GM10248 (cell line): ENCODE measurements at regions of chr6 and their contacts with region 1.

Region 1: DNA sequence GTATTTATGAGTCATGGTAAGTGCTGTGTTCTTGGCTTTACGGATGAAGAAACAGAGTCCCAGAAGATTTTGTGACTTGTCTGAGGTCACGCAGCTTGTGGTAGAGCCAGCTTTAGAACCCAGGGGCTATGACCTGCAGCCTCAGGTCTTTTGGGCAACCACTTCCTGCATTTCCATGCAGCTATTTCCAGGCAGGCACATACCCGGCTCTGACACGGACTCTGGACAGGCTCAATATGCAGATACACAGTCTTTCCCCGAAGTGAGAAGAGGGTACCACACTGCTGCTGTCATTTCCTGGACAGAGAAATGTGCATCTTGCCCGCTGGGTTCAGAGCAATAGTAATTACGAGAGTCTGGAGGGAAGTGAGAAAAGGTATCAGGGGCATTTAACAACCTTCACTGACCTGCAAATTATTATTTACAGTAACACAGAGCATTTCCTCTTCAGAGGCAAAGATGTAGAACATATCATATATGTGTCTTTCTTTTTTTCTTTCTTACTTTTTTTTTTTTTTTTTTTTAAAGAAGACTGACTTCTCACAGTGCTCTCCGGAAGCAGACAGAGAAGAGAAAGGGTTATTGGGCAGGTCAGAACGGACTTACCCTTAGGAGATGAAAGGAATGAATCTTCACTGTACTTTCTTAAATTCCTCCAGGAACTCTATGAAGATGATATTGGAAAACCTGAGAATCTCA is 185.1 kb downstream of the CLIC5 start:
- DNase-seq: peak; percentile 72
- CTCF ChIP-seq: no peak

Region 2: GRCh38 chr6:45398075-45398839 is 432.3 kb before region 1 on chr6:
- CTCF ChIA-PET with region 1: no interaction called
- POLR2A ChIA-PET with region 1: no interaction called
- DNase-seq: no peak
- CTCF ChIP-seq: no peak

Region 3: GRCh38 chr6:45806172-45806571 is 24.4 kb before region 1 on chr6:
- CTCF ChIA-PET with region 1: no interaction called
- POLR2A ChIA-PET with region 1: no interaction called
- DNase-seq: no peak
- CTCF ChIP-seq: no peak

Region 4: DNA sequence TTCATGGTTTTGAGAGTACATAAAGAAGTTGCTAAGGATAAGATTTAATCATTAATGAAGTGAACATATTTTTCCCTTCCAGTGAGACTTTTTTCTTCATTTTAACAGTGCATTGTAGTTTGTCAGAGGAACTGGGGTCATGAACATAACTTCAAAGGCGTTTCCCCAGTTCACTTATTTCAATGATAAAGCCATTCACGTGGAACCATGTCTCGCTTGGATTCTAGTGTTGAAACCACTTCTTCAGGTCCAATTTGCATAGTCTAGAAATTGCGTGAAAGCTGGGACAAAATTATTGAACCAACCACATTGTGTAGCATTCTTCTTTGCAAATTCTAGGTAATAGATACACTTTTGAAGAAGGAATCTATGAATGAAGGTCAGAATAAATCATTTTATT is 11.9 kb before region 1 on chr6:
- CTCF ChIA-PET with region 1: interaction called, 11 read pairs
- POLR2A ChIA-PET with region 1: no interaction called
- DNase-seq: no peak
- CTCF ChIP-seq: no peak

Region 5: DNA sequence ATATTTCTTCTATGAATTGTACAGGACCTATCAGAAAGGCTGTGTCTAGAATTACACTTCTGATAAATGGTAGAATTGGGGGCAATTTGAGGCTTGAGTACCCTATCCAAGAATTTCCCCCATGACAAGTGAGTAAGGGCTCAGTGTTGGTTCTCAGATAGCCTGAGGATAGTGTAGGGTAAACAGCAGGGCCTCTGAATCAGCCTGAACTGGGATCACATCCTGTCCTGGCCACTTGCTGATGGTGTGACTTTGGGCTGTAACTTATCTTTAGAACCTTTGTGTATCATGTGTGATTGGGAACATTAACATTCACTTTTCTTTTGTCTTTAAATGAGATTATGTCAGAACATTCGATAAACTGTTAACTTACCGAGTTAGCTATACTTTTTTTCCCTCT is 34.1 kb after region 1 on chr6:
- CTCF ChIA-PET with region 1: no interaction called
- POLR2A ChIA-PET with region 1: no interaction called
- DNase-seq: no peak
- CTCF ChIP-seq: no peak